Mammary epithelial cell (primary cell): ENCODE measurements at regions of chr21 and their contacts with region 1.

Region 1: GRCh38 chr21:37087188-37087587 is 14.1 kb downstream of the TTC3 start:
- DNase-seq: peak; percentile 59
- H3K4me3 ChIP-seq: no peak overlapping the region
- H3K27ac ChIP-seq: no peak overlapping the region
- H3K4me1 ChIP-seq: no peaks in the 10 kb centered on the region
- H3K27me3 ChIP-seq: no peaks in the 10 kb centered on the region
- CTCF ChIP-seq: peak; percentile 35 to 45

Region 2: GRCh38 chr21:36934864-36935420 is 152.2 kb before region 1 on chr21:
- CTCF ChIA-PET with region 1: no interaction called
- dilution Hi-C with region 1: no loop called
- in situ Hi-C with region 1: no loop called
- intact Hi-C with region 1: loop called (anchors 2 kb)
- DNase-seq: no peak
- H3K4me3 ChIP-seq: no peak overlapping the region
- H3K27ac ChIP-seq: no peak overlapping the region
- H3K4me1 ChIP-seq: peaks cover under 1% of the 10 kb centered on the region
- H3K27me3 ChIP-seq: no peaks in the 10 kb centered on the region
- CTCF ChIP-seq: no peak